Heart left ventricle (tissue), 16 donors: ENCODE measurements at regions of chr1 and their contacts with region 1.

Region 1: GRCh38 chr1:94755675-94756074 is 64.5 kb upstream of the SLC44A3 start:
- DNase-seq: peak in 3 of 5 donors; percentile 20 to 37 (median 24)
- ATAC-seq: peak; percentile 25 to 46 (median 40)
- H3K4me3 ChIP-seq: no peak overlapping the region
- H3K27ac ChIP-seq: peak overlapping the region in 4 of 12 donors; percentile 9 to 69 (median 38)
- H3K4me1 ChIP-seq: peaks cover 7 to 53% (median 28%) of the 10 kb centered on the region in 12 donors
- H3K27me3 ChIP-seq: no peaks in the 10 kb centered on the region
- CTCF ChIP-seq: no peak
- POLR2A ChIP-seq: no peak

Region 2: DNA sequence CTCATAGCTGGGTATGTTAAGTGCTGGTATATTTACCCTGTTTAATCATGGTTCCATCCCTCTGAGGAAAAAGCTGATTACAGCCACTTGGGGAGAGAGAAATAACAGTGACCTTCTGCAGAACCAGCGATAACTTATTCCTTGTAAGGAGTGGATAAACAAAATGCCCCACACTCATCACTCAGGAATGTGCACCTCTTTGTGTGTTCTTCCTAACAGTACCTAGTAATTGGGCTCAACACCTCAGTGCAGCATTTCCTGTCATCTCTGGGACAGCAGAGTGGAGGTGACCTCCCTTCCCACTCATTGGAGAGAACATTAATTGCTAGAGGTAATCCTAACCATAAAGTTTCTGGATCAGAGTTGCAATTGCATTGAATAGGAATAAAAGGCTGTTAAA is 101.6 kb before region 1 on chr1:
- intact Hi-C with region 1: loop called in 3 of 10 experiments (anchors 1 to 5 kb)
- DNase-seq: no peak
- ATAC-seq: peak in 3 of 4 donors; percentile 18 to 45 (median 43)
- H3K4me3 ChIP-seq: no peak overlapping the region
- H3K27ac ChIP-seq: peak overlapping the region in 8 of 12 donors; percentile 21 to 81 (median 62)
- H3K4me1 ChIP-seq: peaks cover 0 to 32% (median 11%) of the 10 kb centered on the region in 12 donors
- H3K27me3 ChIP-seq: no peaks in the 10 kb centered on the region
- CTCF ChIP-seq: no peak
- POLR2A ChIP-seq: no peak

Region 3: DNA sequence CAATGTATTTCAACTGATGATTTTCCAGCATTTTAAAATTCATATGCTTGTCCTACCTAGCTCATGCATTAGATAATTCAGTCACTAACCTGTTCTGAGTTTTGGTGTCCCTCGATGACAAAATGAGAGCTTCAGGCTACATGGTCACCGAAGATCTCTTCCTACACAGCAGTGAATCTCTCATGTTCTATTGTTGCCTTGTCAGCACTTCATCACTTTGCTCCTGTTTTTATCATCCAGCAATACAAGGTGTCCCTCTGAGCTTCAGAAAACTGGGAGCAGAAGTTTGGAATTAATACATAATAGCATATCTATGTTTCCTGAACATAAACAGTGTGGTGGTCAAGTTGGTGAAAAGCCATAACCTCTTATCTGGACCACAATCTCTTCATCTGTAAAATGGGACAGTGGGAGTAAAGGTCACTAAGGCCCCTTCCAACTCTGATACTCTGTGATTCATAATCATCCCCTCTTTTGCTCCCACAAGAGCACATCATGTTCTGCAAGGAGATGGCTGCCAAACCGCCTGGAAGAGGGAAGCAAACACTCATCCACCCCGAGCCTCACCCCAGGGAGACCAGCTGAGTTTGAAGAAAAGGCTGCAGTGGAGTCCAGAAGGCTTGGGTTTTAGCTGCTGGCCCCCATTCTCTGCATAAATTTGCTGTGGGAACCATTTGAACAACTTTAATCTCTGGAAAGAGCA is 76.2 kb before region 1 on chr1:
- intact Hi-C with region 1: loop called in 1 of 10 experiments (anchors 10 kb)
- DNase-seq: peak; percentile 50 to 73 (median 68)
- ATAC-seq: peak in 3 of 4 donors; percentile 63 to 85 (median 78)
- H3K4me3 ChIP-seq: no peak overlapping the region
- H3K27ac ChIP-seq: no peak overlapping the region
- H3K4me1 ChIP-seq: peaks cover 0 to 8% (median 0%) of the 10 kb centered on the region in 12 donors
- H3K27me3 ChIP-seq: no peaks in the 10 kb centered on the region
- CTCF ChIP-seq: no peak
- POLR2A ChIP-seq: no peak

Region 4: DNA sequence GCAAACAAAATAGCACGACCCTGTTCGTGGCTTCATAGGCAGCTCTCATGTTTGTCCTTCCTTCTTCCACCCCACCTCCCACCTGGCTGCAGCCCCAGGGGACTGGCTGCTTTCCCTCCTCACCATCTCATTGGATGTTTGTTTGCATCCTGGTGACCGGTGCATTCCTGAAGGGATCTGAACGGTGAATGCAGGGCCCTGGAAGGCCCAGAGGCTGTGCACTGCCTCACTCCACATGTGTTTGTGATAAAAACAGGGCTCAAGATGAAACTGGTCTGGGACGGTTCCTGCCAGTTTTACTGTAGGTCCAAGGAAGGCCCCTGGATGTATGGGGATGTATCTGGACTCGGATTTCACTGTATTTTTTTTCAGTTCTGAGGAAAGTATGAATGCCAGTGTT is 128.4 kb after region 1 on chr1:
- intact Hi-C with region 1: no loop called
- DNase-seq: no peak
- ATAC-seq: peak in 2 of 4 donors; percentile 42 to 57
- H3K4me3 ChIP-seq: peak overlapping the region in 4 of 12 donors; percentile 16 to 43 (median 34)
- H3K27ac ChIP-seq: peak overlapping the region in 5 of 12 donors; percentile 13 to 63 (median 19)
- H3K4me1 ChIP-seq: peaks cover 0 to 11% (median 7%) of the 10 kb centered on the region in 12 donors
- H3K27me3 ChIP-seq: no peaks in the 10 kb centered on the region
- CTCF ChIP-seq: no peak
- POLR2A ChIP-seq: no peak